ENCODE measurements at regions of chr3 and their contacts with region 1.

Region 1: GRCh38 chr3:155744626-155745324 is at the start of gene PLCH1:
- DNase-seq: peak; percentile 88
- H3K4me3 Mint-ChIP-seq: peak within 1 kb of the TSS; percentile 84
- H3K27ac Mint-ChIP-seq: peak within 1 kb of the TSS; percentile 74
- H3K4me1 Mint-ChIP-seq: peaks cover 60% of the 10 kb centered on the region
- H3K27me3 Mint-ChIP-seq: no peaks in the 10 kb centered on the region
- CTCF ChIP-seq: no peak
- total RNA-seq, gene PLCH1: 11.6 and 13.4 TPM in 2 replicates

Region 2: DNA sequence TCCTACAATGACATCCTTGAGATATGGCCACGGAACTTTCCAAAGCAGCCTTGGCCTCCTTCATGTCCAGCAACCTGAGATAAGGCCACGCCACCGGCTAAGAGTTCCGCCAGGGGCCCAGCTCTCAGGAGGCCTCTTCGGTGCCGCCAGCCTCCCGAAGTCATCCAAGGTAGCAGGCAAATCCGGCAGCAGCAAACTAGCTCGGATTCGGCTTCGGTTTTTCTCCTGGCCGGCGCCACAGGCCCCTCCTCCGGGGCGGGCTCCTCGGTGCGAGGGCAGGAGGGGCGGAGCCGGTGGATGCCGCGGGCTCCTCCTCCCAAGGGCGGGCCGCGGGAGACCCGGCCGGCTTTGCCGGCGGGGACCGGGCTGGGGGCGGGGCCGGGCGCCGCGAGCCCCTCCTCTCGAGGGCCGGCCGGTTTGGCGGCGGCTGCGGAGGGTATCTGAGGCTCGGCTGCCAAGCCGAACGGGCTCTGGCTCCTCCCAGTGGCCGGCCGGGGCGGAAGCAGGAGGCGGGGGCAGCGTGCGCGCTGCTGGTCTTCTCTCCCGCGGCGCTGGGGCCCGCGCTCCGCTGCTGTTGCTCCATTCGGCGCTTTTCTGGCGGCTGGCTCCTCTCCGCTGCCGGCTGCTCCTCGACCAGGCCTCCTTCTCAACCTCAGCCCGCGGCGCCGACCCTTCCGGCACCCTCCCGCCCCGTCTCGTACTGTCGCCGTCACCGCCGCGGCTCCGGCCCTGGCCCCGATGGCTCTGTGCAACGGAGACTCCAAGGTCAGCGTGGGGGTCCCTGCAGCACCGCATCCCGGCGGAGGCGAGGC is 125.6 kb after region 1 on chr3 and contains the start of gene GMPS:
- CTCF ChIA-PET with region 1: interaction called, 3 read pairs
- intact Hi-C with region 1: loop called (anchors 5 kb)
- DNase-seq: peak; percentile 100
- H3K4me3 Mint-ChIP-seq: peak within 1 kb of the TSS; percentile 97
- H3K27ac Mint-ChIP-seq: peak within 1 kb of the TSS; percentile 86
- H3K4me1 Mint-ChIP-seq: peaks cover 37% of the 10 kb centered on the region
- H3K27me3 Mint-ChIP-seq: no peaks in the 10 kb centered on the region
- CTCF ChIP-seq: peak; percentile 21
- total RNA-seq, gene GMPS: 171 and 194 TPM in 2 replicates

Measured in Calu3 (cell line).